CD8-positive, alpha-beta T cell (primary cell): ENCODE measurements at regions of chr14 and their contacts with region 1.

Region 1: GRCh38 chr14:64715628-64716412 is 11.6 kb downstream of the PLEKHG3 start:
- DNase-seq: no peak
- ATAC-seq: no peak
- H3K4me3 ChIP-seq: no peak overlapping the region
- H3K4me3 Mint-ChIP-seq: no peak overlapping the region
- H3K27ac ChIP-seq: no peak overlapping the region
- H3K27ac Mint-ChIP-seq: no peak overlapping the region
- H3K4me1 ChIP-seq: peaks cover 6% of the 10 kb centered on the region
- H3K4me1 Mint-ChIP-seq: peaks cover 12% of the 10 kb centered on the region
- H3K27me3 ChIP-seq: no peaks in the 10 kb centered on the region
- H3K27me3 Mint-ChIP-seq: peaks cover 9% of the 10 kb centered on the region
- CTCF ChIP-seq: no peak

Region 2: GRCh38 chr14:64726585-64726890 is 10.7 kb after region 1 on chr14:
- CTCF ChIA-PET with region 1: no interaction called
- POLR2A ChIA-PET with region 1: no interaction called
- intact Hi-C with region 1: no loop called
- DNase-seq: peak in 3 of 9 experiments; percentile 16 to 54 (median 50)
- ATAC-seq: no peak
- H3K4me3 ChIP-seq: no peak overlapping the region
- H3K4me3 Mint-ChIP-seq: no peak overlapping the region
- H3K27ac ChIP-seq: peak overlapping the region in 1 of 2 experiments; percentile 87
- H3K27ac Mint-ChIP-seq: peak overlapping the region; percentile 27
- H3K4me1 ChIP-seq: peaks cover 31% of the 10 kb centered on the region
- H3K4me1 Mint-ChIP-seq: peaks cover 44% of the 10 kb centered on the region
- H3K27me3 ChIP-seq: no peaks in the 10 kb centered on the region
- H3K27me3 Mint-ChIP-seq: no peaks in the 10 kb centered on the region
- CTCF ChIP-seq: no peak

Region 3: GRCh38 chr14:64758691-64759584 is 43.1 kb after region 1 on chr14:
- CTCF ChIA-PET with region 1: no interaction called
- POLR2A ChIA-PET with region 1: no interaction called
- intact Hi-C with region 1: loop called in 1 of 2 experiments (anchors 5 kb)
- DNase-seq: no peak
- ATAC-seq: no peak
- H3K4me3 ChIP-seq: no peak overlapping the region
- H3K4me3 Mint-ChIP-seq: no peak overlapping the region
- H3K27ac ChIP-seq: peak overlapping the region in 1 of 2 experiments; percentile 71
- H3K27ac Mint-ChIP-seq: peak overlapping the region; percentile 56
- H3K4me1 ChIP-seq: no peaks in the 10 kb centered on the region
- H3K4me1 Mint-ChIP-seq: peaks cover 16% of the 10 kb centered on the region
- H3K27me3 ChIP-seq: no peaks in the 10 kb centered on the region
- H3K27me3 Mint-ChIP-seq: peaks cover 6% of the 10 kb centered on the region
- CTCF ChIP-seq: no peak

Region 4: DNA sequence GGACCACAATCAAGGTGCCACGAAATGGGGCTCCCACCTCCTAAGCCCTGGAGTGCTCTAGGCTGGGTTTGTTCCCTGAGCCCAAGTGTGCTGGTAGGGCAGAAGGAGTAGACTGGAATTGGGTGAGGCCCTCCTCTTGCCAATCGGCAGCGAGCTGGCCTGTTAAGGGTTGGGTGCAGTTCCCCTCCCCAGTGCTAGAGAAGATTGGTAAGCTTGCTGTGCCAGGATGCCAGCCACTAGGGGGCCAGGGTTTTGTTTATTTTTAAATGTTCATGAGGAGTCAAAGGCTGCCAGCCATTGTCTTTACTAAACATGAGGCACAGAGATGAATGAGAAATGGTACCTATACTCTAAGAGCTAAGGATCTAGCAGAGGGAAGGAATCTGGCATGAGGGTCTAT is 84.2 kb after region 1 on chr14:
- CTCF ChIA-PET with region 1: no interaction called
- POLR2A ChIA-PET with region 1: no interaction called
- intact Hi-C with region 1: no loop called
- DNase-seq: peak in 2 of 9 experiments; percentile 15 to 19
- ATAC-seq: no peak
- H3K4me3 ChIP-seq: no peak overlapping the region
- H3K4me3 Mint-ChIP-seq: no peak overlapping the region
- H3K27ac ChIP-seq: no peak overlapping the region
- H3K27ac Mint-ChIP-seq: no peak overlapping the region
- H3K4me1 ChIP-seq: no peaks in the 10 kb centered on the region
- H3K4me1 Mint-ChIP-seq: no peaks in the 10 kb centered on the region
- H3K27me3 ChIP-seq: no peaks in the 10 kb centered on the region
- H3K27me3 Mint-ChIP-seq: peaks cover 4% of the 10 kb centered on the region
- CTCF ChIP-seq: no peak